A549 (cell line): ENCODE measurements at regions of chr12 and their contacts with region 1.

Region 1: DNA sequence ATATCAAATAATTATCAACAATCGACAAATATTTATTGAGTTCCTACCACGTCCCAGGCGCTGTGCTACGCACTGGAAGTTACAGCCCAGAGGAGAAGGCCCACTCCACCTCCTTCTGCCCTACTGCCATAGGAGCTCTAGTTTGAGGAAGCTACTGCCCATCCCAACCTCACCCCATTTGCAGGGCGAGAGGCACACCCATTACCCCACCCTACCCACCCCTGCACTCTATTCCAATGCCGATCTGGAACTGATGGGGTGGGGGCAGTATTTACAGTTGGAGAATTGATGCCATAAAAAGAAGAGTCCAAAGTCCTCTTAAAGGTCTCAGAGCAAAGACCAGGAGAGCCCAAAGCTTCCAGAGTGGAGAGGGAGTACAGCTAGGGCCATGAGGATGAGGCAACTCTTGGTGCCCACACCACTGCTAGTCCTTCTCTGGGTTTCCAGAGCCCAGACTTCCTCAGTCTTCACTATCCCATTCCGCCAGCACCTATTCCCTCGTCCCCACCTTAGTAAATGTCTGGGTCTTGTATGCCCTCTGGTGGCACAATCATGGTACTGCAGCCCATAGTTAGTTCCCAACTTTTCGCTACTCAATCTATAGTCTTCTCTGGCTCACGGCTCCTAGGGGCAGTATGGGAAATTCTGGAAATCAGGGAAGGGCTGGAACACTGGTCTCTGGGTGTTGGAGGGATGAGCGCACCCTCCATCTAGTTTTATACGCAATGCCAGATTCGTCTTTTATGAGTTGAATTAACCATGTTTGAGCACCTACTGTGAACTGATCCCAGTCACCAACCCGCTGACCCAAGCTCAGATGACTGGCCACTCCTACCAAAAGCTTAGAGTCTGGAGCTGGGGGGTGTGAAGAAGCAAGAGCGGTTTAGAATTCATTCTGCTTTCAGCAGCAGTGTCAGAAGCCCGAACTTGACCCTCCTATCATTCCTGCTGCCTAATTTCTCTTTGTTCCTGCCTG is 6.9 kb upstream of the ADCY6 start:
- DNase-seq: peak; percentile 87 to 96
- ATAC-seq: peak; percentile 89 to 95
- H3K4me3 ChIP-seq: no peak overlapping the region
- H3K27ac ChIP-seq: peak overlapping the region in 1 of 2 experiments; percentile 39; a peak in 1 of 6 replicates
- H3K4me1 ChIP-seq: peaks cover 9% of the 10 kb centered on the region
- CTCF ChIP-seq: peak; percentile 94
- EP300 ChIP-seq: no peak
- POLR2A ChIP-seq: no peak
- RAD21 ChIP-seq: peak; percentile 96 to 99

Region 2: DNA sequence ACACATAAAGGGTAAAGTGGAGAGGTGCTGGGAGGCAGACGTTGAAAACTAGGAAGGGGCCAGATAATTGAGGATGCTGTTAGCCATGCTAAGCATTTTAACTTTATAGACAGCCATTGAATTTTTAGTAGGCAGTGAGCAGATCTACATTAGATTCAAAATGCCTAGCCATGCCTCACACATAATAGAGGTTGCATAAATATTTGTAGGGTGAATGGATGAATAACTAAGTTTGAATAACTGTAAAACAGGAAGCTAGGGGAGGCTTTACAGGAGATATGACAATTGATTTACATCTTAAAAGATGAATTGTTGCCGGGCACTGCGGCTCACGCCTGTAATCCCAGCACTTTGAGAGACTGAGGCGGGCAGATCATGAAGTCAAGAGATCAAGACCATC is 67.0 kb before region 1 on chr12:
- CTCF ChIA-PET with region 1: interaction called, 14 read pairs
- POLR2A ChIA-PET with region 1: no interaction called
- DNase-seq: no peak
- ATAC-seq: no peak
- H3K4me3 ChIP-seq: no peak overlapping the region
- H3K27ac ChIP-seq: no peak overlapping the region
- H3K4me1 ChIP-seq: no peaks in the 10 kb centered on the region
- CTCF ChIP-seq: no peak
- EP300 ChIP-seq: no peak
- POLR2A ChIP-seq: no peak
- RAD21 ChIP-seq: no peak

Region 3: GRCh38 chr12:48750769-48751735 is 44.7 kb before region 1 on chr12:
- CTCF ChIA-PET with region 1: interaction called, 265 read pairs
- POLR2A ChIA-PET with region 1: interaction called, 14 read pairs
- DNase-seq: no peak
- ATAC-seq: no peak
- H3K4me3 ChIP-seq: no peak overlapping the region
- H3K27ac ChIP-seq: no peak overlapping the region
- H3K4me1 ChIP-seq: no peaks in the 10 kb centered on the region
- CTCF ChIP-seq: no peak
- EP300 ChIP-seq: no peak
- POLR2A ChIP-seq: no peak
- RAD21 ChIP-seq: no peak

Region 4: GRCh38 chr12:48765753-48766162 is 30.0 kb before region 1 on chr12:
- CTCF ChIA-PET with region 1: interaction called, 28 read pairs
- POLR2A ChIA-PET with region 1: no interaction called
- DNase-seq: no peak
- ATAC-seq: no peak
- H3K4me3 ChIP-seq: no peak overlapping the region
- H3K27ac ChIP-seq: no peak overlapping the region
- H3K4me1 ChIP-seq: no peaks in the 10 kb centered on the region
- CTCF ChIP-seq: no peak
- EP300 ChIP-seq: no peak
- POLR2A ChIP-seq: no peak
- RAD21 ChIP-seq: no peak

Region 5: DNA sequence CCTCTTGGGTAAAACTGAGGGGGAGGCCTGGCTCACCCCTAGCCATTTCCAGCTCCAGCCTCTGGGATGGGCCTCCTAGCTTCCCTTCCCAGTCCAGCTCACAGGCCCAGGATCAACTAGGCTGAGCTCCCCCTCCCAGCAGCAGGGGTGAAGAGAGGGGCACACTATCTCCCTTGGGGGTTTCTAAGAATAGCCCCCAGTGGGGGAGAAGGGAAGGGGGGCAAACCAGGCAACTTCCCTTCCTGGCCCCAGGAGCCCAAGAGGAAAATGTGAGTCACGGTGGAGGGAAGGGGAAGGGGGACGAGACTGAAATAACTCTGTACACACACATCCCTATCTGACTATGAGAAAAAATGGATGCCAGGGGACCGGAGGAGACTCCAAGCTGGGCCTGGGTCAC is 15.9 kb before region 1 on chr12:
- CTCF ChIA-PET with region 1: interaction called, 61 read pairs
- POLR2A ChIA-PET with region 1: no interaction called
- DNase-seq: no peak
- ATAC-seq: no peak
- H3K4me3 ChIP-seq: no peak overlapping the region
- H3K27ac ChIP-seq: no peak overlapping the region
- H3K4me1 ChIP-seq: no peaks in the 10 kb centered on the region
- CTCF ChIP-seq: no peak
- EP300 ChIP-seq: no peak
- POLR2A ChIP-seq: no peak
- RAD21 ChIP-seq: no peak

Region 6: DNA sequence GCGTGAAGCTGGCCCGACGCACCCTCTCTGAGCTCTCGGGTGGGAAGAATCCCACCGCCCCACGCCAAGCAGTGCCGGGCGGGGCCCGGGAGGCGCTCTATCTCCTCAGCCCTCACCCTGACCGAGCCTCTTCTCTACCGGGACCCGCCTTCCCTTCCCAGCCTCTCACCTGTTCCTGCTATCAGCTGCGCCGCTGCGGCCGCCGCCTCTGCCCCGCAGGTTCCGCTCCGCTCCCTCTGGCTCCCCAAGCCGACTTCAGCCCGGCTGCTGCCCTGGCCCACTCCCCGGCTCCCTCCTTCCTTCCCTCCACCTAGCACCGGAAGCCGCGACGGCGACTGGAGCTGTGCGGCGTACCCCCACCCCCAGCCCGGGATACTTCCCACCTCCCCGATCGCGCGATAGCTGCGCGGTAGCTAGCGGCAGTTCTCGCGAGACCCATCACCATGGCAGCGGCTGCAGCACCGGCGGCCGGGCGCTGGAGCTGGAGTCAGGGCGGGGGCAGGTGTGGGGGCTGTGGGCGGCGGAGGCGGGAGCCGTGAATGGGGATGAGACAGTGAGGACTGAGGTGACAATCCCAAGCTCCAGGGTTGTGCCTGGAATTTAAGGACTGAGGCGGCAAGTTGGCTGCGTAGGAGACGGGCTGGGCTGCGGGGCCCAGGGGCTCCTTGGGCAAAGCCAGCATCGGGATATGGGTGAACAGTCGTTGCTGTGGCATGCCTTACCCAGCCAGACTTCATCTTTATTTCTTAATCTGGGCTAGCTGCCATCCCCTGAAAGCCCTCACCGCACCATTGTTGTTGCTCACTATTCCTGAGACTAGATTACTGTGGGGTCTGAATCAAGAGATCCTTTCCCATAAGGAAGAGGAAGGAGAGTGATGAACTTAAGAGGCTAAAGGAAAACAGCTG is 161.6 kb after region 1 on chr12 and contains the start of gene ARF3:
- CTCF ChIA-PET with region 1: no interaction called
- POLR2A ChIA-PET with region 1: no interaction called
- DNase-seq: peak; percentile 95 to 96
- ATAC-seq: peak; percentile 87 to 94
- H3K4me3 ChIP-seq: peak within 1 kb of the TSS; percentile 79
- H3K27ac ChIP-seq: peak within 1 kb of the TSS; percentile 95
- H3K4me1 ChIP-seq: peaks cover 10% of the 10 kb centered on the region
- CTCF ChIP-seq: no peak
- EP300 ChIP-seq: no peak
- POLR2A ChIP-seq: peak; percentile 68
- RAD21 ChIP-seq: no peak
- polyA plus RNA-seq, gene ARF3: 281 and 287 TPM in 2 replicates